Activated T-helper 2 cell treated with anti-CD3 and anti-CD28 coated beads, Interferon-gamma antibody, Interleukin-2, Interleukin-4, amounts not matched to agents 10 μg/mL and 5 μg/mL and 100 μg/mL, durations not matched to agents 14 hours and 24 hours and 36 hours (primary cell): ENCODE measurements at regions of chr16 and their contacts with region 1.

Region 1: GRCh38 chr16:68064791-68065365 is 20.3 kb upstream of the NFATC3 start:
- DNase-seq: peak; percentile 72
- H3K4me3 Mint-ChIP-seq: no peak overlapping the region
- H3K27ac Mint-ChIP-seq: peak overlapping the region; percentile 79
- H3K4me1 Mint-ChIP-seq: peaks cover 66% of the 10 kb centered on the region
- H3K27me3 Mint-ChIP-seq: no peaks in the 10 kb centered on the region

Region 2: DNA sequence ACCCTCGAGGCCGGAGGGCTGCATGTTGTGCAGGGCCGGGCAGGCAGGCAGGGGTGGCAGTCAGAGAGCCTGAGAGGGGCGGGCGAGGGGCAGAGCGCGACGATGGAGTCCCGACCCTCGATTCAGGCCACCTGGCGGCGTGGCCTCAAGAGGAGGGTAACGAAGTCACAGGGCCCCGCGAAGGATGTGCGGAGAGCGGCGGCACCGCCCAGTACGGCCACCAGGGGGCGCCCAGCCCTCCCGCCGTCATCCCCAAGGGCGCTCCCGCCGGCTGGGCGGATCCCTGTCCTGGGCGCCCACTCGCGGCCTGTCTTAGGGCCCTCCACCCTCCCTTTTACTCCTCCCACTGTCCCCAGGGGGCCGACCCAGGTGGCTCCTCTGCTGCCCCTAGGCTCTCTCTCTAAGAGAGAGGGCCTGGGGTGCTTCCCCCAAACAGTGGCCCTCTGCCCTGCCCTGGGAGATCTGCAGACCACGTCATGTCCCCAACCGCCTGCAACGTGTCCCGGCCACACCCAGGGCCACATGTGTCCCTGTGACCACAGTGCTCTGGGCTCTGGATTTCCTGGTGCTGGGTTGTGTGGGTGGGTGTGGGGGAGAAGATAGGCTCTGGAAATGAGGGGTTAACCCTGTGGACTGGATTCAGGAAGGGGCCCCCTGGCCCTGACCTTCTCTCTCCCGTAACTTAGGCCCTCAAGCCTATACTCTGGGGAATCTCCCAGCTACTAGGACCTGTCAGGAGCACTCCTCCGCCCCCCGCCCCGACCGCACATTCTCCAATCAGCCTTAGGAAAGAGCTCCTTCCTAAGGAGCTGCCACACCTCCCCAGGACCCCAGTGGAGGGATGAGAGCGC is 71.5 kb before region 1 on chr16:
- intact Hi-C with region 1: loop called (anchors 1 kb)
- DNase-seq: peak; percentile 80
- H3K4me3 Mint-ChIP-seq: peak overlapping the region; percentile 79
- H3K27ac Mint-ChIP-seq: peak overlapping the region; percentile 99
- H3K4me1 Mint-ChIP-seq: peaks cover 30% of the 10 kb centered on the region
- H3K27me3 Mint-ChIP-seq: no peaks in the 10 kb centered on the region

Region 3: DNA sequence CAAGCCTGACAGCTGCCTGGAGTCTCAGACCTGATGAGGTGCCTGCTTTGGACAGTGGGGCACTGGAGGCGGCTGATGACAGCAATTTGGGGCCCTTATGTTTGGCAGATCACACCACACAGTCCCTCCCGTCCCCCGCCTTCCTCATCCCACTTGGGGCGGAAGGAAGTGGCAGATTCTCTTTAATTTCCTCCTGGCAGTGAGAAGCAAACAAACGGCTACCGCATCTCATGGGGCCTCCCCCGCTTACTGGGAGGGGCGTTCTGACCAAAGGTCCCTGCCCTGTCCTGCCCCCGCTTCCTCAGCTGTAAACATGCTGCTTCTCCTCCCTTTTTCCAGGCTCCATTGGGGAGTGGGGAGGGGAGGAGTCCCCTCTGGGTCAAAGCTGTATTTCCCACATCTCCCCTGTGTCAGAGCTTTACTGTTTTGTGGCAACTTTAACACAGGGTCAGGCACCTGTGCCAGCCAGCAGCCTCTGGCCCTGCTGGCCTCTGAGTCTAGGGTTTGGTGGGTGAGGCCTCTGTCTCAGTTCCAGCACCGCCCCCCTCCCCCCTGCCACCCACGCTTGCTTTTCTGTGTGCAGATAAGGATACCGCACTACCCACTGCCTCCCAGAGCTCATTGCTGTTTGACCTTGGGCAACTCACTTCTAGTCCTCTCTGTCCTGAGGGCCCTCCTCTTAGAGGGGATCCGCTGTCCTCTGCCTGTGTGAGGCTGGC is 14.9 kb after region 1 on chr16:
- intact Hi-C with region 1: loop called (anchors 2 kb)
- DNase-seq: peak; percentile 79
- H3K4me3 Mint-ChIP-seq: peak overlapping the region; percentile 51
- H3K27ac Mint-ChIP-seq: peak overlapping the region; percentile 96
- H3K4me1 Mint-ChIP-seq: peaks cover 84% of the 10 kb centered on the region
- H3K27me3 Mint-ChIP-seq: no peaks in the 10 kb centered on the region